CD4-positive, alpha-beta T cell (primary cell): ENCODE measurements at regions of chr7 and their contacts with region 1.

Region 1: DNA sequence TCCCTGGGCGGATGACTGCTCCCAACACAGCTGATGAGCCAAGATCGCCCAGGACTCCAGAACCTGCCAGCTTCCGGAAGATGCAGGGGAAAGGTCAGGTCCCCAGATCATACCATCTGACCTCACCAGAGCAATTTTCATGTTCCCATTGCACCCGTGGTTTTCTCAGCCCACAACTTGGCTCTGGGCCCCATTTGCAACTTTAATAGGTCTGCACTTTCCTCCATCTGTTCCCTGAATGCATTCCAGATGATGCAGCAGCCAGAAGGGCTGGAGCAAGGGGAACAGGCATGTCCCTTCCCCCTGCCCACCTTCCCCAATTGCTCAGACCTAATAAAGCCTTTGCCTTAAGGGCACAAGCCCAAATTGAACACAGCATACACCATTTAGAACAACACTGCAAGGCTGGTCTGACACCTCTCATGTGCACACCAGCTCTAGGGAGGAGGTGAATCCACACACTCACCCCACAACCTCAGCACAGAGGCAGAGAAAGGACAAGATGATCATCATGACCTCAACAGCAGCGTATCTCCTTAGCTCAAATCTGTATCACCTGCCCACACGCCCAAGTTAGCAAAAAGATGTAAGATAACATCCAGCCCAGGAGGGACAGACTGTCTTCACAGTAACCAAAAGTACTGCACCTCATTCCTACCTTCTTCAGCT is 87.5 kb downstream of the PLXNA4 start:
- DNase-seq: no peak
- ATAC-seq: no peak
- H3K4me3 ChIP-seq: no peak overlapping the region
- H3K4me3 Mint-ChIP-seq: no peak overlapping the region
- H3K27ac ChIP-seq: no peak overlapping the region
- H3K27ac Mint-ChIP-seq: no peak overlapping the region
- H3K4me1 ChIP-seq: peaks cover 28% of the 10 kb centered on the region
- H3K4me1 Mint-ChIP-seq: peaks cover 38% of the 10 kb centered on the region
- H3K27me3 ChIP-seq: no peaks in the 10 kb centered on the region
- H3K27me3 Mint-ChIP-seq: no peaks in the 10 kb centered on the region
- CTCF ChIP-seq: no peak

Region 2: DNA sequence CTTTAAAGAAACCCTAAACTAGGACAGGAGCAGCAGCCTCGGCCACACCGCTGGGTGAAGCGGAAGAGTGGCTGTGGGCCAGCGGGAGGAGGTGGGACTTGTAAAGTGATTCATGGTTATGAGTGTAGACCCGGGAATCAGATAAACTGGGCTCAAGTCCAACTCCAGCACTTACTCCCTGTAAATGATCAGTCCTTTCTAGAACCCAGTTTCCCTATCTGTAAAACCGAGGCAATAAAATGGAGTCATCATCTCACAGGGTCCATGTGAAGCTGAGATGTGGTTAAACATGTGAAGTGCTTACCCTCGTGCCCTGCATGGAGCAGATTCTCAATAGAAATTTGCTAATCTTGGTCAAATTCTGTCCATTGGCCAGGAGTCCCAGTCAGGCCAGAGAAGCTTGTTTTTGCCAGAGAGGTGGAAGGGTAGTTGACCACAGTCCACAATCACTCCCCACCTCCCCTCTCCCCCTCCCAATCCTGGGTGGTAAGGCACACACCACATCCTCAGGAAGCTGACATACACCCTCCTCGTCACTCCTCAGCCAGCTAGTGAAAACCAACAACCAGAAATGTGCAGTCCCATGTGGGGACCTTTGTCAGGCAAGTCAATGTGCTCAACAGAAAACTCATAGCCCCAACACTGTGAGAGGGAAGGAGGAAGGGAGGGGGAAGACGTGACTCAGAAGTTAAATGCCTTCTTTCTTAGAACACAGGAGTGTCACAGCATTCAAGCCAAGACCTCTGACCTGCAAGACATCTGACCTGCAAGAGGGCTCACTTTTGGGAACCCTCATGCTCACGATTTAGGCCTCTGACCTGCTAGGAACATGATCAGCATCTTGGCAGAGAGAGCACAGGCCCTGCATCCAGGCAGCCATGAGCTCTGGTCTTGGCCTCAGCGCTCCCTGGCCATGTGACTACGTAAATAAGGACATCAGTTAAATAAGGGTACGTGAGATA is 57.6 kb before region 1 on chr7:
- CTCF ChIA-PET with region 1: no interaction called
- POLR2A ChIA-PET with region 1: interaction called, 3 read pairs
- intact Hi-C with region 1: loop called (anchors 5 kb)
- DNase-seq: peak in 11 of 14 experiments; percentile 15 to 88 (median 38)
- ATAC-seq: peak; percentile 85
- H3K4me3 ChIP-seq: no peak overlapping the region
- H3K4me3 Mint-ChIP-seq: peak overlapping the region; percentile 5
- H3K27ac ChIP-seq: peak overlapping the region in 1 of 2 donors; percentile 31
- H3K27ac Mint-ChIP-seq: peak overlapping the region; percentile 67
- H3K4me1 ChIP-seq: peaks cover 67% of the 10 kb centered on the region
- H3K4me1 Mint-ChIP-seq: peaks cover 72% of the 10 kb centered on the region
- H3K27me3 ChIP-seq: no peaks in the 10 kb centered on the region
- H3K27me3 Mint-ChIP-seq: no peaks in the 10 kb centered on the region
- CTCF ChIP-seq: no peak

Region 3: DNA sequence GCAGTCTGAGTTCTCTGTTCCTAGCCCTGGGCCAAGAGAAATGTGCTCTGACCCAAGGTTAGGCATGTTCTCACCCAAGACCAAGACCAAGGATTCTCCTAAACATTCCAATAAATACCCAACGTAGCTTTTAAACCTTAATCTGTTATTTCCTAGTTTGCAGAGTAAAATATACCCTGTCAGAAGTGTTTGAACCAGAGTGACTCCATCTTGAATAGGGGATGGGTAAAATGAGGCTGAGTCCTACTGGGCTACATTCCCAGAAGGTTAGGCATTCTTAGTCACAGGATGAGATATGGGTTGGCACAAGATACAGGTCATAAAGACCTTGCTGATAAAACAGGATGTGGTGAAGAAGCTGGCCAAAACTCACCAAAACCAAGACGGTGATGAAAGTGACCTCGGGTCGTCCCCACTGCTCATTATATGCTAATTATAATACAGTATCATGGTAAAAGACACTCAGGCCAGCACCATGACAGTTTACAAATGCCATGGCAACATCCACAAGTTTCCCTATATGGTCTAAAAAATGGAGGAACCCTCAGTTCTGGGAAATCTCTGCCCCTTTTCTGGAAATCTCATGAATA is 59.8 kb after region 1 on chr7:
- CTCF ChIA-PET with region 1: no interaction called
- POLR2A ChIA-PET with region 1: no interaction called
- intact Hi-C with region 1: loop called in 1 of 2 experiments (anchors 10 kb)
- DNase-seq: no peak
- ATAC-seq: no peak
- H3K4me3 ChIP-seq: no peak overlapping the region
- H3K4me3 Mint-ChIP-seq: no peak overlapping the region
- H3K27ac ChIP-seq: no peak overlapping the region
- H3K27ac Mint-ChIP-seq: no peak overlapping the region
- H3K4me1 ChIP-seq: no peaks in the 10 kb centered on the region
- H3K4me1 Mint-ChIP-seq: no peaks in the 10 kb centered on the region
- H3K27me3 ChIP-seq: no peaks in the 10 kb centered on the region
- H3K27me3 Mint-ChIP-seq: peaks cover 20% of the 10 kb centered on the region
- CTCF ChIP-seq: no peak